ENCODE measurements at regions of chr7 and their contacts with region 1.

Region 1: GRCh38 chr7:4681886-4682620 is at the start of gene FOXK1:
- DNase-seq: peak; percentile 83 to 92
- ATAC-seq: peak; percentile 90
- H3K4me3 ChIP-seq: peak within 1 kb of the TSS; percentile 80 to 98
- H3K27ac ChIP-seq: peak within 1 kb of the TSS; percentile 57 to 61
- H3K4me1 ChIP-seq: no peaks in the 10 kb centered on the region
- H3K27me3 ChIP-seq: no peaks in the 10 kb centered on the region
- total RNA-seq, gene FOXK1: 41.4 to 47.5 TPM

Region 2: DNA sequence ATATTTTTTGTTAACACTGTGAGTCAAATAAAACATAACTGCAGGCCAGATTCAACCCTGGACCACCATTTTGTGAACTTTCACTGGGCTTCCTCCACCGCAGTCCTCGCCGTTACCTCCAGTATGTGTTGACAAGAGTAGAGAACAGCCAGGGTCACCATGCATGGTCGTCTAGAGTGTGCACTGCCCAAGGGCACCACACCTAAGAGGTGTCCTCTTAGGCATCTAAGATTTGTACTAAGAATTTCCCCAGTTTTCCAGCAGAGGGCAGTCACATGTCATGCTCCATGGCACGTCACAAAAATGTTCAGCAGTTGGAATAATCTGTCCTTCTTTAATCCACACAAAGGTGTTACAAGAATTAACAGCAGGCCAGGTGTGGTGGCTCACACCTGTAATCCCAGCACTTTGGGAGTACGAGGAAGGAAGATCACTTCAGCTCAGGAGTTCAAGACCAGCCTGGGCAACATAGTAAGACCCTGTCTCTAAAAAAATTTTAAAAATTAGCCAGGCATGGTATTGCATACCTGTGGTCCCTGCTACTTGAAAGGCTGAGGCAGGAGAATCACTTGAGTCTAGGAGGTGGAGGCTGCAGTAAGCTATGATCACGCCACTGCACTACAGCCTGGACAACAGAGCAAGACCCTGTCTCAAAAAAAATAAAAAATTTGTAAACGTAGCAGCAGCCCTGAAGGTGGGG is 71.1 kb before region 1 on chr7:
- intact Hi-C with region 1: no loop called
- DNase-seq: peak in 1 of 2 donors; percentile 60
- ATAC-seq: peak; percentile 85
- H3K4me3 ChIP-seq: no peak overlapping the region
- H3K27ac ChIP-seq: no peak overlapping the region
- H3K4me1 ChIP-seq: no peaks in the 10 kb centered on the region
- H3K27me3 ChIP-seq: no peaks in the 10 kb centered on the region

Region 3: DNA sequence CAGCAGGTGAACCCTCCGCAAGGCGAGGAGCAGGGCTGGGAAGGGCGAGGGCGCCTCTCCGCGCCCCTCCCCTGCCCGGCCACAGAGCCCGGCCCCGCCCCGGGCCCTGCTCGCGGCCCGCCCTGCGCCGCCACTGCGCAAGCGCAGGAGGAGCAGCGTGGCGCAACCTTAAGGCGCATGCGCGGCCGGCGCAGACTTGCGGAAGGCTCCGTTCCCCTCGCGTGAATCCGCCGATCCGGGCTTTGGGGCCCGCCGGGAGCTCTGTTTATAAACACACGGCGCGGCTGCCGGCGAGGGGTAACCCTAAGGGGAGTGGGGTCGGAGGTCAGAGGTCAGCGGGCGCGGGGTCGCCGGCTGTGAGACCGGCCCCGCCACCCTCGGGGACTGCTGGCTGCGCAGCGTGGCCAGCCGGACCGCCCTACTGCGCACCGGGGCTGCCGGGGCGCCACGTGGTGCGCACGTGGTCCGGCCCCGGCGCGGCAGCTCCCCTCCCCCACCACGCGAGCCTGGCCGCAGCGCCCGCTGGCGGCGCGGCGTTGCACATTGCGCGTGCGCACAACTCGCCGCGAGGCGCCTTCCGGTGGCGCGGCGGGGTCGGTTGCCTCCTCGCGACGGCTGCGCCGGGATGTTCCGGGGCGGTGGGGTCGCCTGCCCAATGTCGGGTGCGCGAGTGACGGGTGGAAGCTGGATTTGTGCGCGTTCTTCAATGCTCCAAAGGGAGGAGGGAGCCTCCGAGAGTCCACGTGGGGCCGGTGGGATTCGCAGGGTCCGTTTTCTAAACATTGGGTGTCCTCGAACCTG is 40.2 kb before region 1 on chr7:
- intact Hi-C with region 1: loop called (anchors 1 to 2 kb)
- DNase-seq: peak; percentile 97 to 99
- ATAC-seq: peak; percentile 97
- H3K4me3 ChIP-seq: peak overlapping the region; percentile 37 to 55
- H3K27ac ChIP-seq: peak overlapping the region in 1 of 2 donors; percentile 46
- H3K4me1 ChIP-seq: no peaks in the 10 kb centered on the region
- H3K27me3 ChIP-seq: no peaks in the 10 kb centered on the region

Region 4: GRCh38 chr7:4730971-4731370 is 48.9 kb after region 1 on chr7:
- intact Hi-C with region 1: no loop called
- DNase-seq: no peak
- ATAC-seq: no peak
- H3K4me3 ChIP-seq: no peak overlapping the region
- H3K27ac ChIP-seq: no peak overlapping the region
- H3K4me1 ChIP-seq: no peaks in the 10 kb centered on the region
- H3K27me3 ChIP-seq: no peaks in the 10 kb centered on the region

Region 5: GRCh38 chr7:4753711-4754432 is 71.8 kb after region 1 on chr7:
- intact Hi-C with region 1: loop called in 1 of 2 experiments (anchors 5 kb)
- DNase-seq: peak; percentile 82 to 95
- ATAC-seq: peak; percentile 84
- H3K4me3 ChIP-seq: no peak overlapping the region
- H3K27ac ChIP-seq: no peak overlapping the region
- H3K4me1 ChIP-seq: no peaks in the 10 kb centered on the region
- H3K27me3 ChIP-seq: no peaks in the 10 kb centered on the region